HEK293 (cell line): ENCODE measurements at regions of chr11 and their contacts with region 1.

Region 1: DNA sequence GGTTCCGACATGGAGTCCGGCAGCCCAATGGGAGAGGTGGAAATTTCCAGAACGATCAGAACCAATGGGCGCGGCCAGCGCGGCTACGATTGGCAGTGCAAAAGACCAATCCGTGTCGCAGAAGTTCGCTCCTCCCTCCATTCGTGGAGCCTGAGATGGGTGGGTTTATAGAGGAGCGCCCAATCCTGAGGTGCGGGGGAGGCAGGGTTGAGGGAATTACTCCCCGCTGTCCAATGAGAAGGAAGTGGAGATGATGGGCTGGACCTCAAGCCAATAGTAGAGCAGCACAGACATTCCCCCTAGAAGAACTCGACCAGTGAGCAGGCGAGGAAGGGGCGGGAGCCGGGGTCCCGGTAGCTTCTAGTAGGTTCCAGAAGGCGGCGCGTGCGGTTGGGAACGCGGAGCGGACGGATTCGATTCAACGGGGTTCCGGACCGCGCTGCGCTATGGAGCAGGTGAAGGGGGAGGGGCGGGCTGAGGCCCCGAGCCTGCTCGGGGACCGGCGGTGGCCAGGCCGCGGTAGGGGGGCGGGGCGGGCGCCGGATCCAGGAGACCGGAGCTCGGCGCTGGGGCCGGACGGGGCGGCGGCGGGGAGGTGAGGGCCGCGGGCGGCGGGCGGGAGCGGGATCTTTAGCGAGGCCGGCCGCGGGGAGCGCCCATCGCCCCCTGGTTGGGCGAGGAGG is at the start of gene STIP1:
- H3K4me3 ChIP-seq: peak within 1 kb of the TSS; percentile 75
- H3K27ac ChIP-seq: peak within 1 kb of the TSS; percentile 82
- H3K4me1 ChIP-seq: peaks cover 3% of the 10 kb centered on the region; the same call in 1 of the 2 replicates
- CTCF ChIP-seq: peak; percentile 65

Region 2: DNA sequence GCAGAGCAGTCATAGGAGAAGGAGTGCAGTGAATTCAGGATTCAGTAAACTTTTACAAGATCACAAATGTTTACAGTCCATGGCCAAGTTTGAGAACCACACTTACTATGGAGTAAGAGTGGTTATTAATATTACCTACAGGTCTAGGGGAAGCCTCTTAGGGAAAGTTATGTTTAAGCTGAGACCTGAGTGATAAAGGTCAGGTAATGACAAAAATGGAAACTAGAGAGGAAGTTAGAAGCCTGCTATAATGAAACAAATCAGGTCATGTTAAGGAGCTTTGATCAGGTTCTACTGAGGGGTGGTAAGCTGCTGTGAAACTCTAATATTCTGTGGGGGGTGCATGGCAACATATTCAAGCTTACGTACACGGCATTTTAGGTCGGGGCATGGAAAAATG is 848.9 kb before region 1 on chr11:
- CTCF ChIA-PET with region 1: no interaction called
- POLR2A ChIA-PET with region 1: no interaction called
- H3K4me3 ChIP-seq: no peak overlapping the region
- H3K27ac ChIP-seq: no peak overlapping the region
- H3K4me1 ChIP-seq: no peaks in the 10 kb centered on the region
- CTCF ChIP-seq: no peak

Region 3: DNA sequence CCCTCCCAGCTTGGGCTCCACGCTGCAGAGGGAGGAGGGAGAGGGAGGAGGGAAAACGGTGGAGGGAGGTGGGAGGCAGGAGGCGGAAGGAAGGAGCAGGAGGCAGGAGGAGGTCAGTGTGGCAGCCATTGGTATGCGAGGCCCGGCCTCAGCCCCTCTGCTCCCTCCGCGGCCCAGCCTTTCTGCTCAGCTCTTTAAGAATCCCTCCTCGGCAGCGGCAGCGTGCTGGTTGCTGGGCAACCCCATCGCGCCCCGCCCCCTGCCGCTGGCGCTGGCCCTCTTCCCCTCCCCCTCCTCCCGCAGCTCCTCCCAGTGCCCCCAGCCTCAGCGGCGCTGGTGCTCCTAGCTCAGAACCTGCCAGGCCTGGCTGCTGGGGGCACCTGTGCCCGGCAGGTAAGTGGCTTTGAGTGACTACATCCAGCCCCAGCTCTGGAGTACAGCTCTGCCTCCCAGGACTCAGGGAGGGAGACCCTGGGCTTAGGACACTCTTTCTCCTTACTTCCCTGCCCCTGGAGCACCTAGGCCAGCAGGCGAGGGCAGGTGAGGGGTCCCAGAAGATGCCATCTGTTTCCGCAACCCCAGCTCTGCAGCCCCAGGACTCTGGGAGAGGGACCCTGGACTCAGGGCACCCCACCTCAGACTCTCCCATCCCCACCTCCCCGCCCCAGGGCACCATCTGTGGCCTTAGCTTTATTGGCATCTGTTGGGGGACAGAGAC is 157.4 kb before region 1 on chr11:
- CTCF ChIA-PET with region 1: no interaction called
- POLR2A ChIA-PET with region 1: no interaction called
- H3K4me3 ChIP-seq: no peak overlapping the region
- H3K27ac ChIP-seq: no peak overlapping the region
- H3K4me1 ChIP-seq: no peaks in the 10 kb centered on the region
- CTCF ChIP-seq: no peak

Region 4: DNA sequence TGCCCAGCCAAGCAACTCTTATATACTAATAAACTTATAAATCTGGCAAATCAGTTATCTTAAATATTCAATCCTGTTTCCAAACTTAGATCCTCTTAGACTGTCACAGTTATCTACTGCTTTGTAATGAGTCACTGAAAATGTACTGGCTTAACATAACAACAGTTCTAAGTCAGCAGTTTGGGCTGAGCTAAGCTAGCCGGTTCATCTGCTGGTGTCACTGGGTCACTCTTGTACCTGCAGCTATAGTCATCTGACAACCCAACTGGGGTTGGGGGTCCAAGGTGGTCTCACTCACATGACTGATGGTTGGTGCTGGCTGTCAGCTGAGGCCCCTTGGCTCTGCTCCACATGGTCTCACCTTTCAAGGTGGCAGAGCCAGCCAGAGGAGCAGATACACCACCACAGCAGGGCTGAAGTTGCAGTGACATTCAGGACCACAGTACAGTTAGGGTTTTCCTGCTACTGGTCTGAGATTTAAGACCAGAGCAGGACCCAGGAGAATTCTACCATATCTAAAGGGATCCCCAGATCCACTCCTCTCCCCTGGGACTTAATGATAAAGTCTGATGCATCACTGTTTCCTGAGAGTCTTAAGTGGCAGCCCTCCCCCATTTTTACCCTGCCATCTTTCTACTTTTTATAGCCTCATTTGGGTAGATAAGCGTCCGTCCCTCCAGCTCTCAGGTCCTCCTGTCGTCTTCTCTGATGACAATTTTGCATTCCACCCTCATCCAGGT is 12.2 kb before region 1 on chr11:
- CTCF ChIA-PET with region 1: interaction called, 3 read pairs
- POLR2A ChIA-PET with region 1: interaction called, 15 read pairs
- H3K4me3 ChIP-seq: no peak overlapping the region
- H3K27ac ChIP-seq: no peak overlapping the region
- H3K4me1 ChIP-seq: no peaks in the 10 kb centered on the region
- CTCF ChIP-seq: no peak

Region 5: DNA sequence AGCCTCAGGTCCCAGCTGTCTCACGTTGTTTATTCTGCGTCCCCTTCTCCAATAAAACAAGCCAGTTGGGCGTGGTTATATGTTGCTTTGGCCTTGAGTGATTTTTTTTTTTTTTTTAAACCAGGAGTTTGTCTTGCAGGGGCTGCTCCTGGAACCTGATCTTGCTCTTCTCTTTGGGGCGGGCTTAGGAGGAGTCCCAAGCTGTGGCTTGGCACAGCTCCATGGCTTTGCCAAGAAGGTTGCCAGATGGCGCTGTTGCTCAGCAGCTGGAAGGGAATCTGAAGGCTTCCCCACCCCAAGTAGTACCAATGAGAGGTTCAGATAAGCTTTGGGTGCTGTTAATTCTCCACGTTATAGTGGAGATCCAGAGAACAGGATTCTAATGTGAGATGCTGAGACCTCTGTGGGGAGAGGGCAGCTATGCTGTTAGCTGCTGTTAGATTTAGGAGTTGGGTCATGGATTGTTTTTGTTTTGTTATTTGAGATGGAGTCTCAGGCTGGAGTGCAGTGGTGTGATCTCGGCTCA is 18.6 kb after region 1 on chr11:
- CTCF ChIA-PET with region 1: interaction called, 31 read pairs
- POLR2A ChIA-PET with region 1: interaction called, 32 read pairs
- H3K4me3 ChIP-seq: no peak overlapping the region
- H3K27ac ChIP-seq: peak overlapping the region; percentile 55
- H3K4me1 ChIP-seq: 0 out of 2 replicates have a peak, but pooled peaks cover 8% of the 10 kb centered on the region
- CTCF ChIP-seq: peak; percentile 80

Region 6: GRCh38 chr11:64240394-64241174 is 54.6 kb after region 1 on chr11 and contains the start of gene FKBP2:
- CTCF ChIA-PET with region 1: no interaction called
- POLR2A ChIA-PET with region 1: interaction called, 13 read pairs
- H3K4me3 ChIP-seq: peak within 1 kb of the TSS; percentile 75
- H3K27ac ChIP-seq: peak within 1 kb of the TSS; percentile 83
- H3K4me1 ChIP-seq: no peaks in the 10 kb centered on the region
- CTCF ChIP-seq: no peak

Region 7: DNA sequence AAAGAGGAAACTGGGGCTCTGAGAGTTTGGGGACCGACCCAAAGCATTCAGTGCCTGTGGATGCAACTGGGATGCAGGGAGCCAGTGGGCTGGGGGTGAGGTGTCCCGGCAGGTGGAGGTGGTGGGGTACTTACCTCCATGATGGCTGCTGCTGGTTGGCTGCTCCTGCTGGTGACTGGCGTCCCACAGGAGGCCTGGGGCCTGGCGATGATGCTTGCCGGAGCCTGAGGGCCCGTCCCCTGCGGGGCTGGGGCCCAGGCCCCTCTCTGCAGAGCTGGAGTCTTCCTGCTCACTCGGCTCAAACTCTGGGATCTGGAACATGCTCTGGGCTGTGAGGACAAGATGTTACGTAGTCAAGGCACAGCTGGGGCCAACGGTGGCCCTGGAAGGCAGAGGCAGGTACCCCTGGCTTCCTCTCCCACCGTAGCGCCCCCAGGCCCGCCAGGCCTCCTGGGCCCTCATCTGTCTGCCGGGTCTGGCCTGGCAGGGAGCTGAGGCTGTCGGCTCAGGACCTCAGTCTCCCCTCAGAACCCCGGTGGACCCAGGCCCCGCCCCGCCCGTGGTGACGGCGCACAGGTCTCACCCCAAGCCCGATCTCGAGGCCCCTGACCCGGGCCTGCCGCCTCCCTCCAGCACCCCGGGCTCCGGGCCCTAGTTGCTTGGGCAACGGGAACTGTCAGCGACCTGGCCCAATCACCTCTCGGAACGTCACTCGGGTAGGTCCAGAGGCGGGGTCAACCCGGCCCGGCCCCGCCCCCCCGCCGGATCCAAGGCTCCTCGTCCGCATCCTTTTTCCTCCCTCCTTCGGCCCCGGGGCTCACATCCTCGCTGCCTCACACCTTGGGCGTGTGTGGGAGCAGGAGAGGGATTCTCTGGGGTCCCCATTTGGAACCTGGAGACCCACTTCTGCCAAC is 98.3 kb after region 1 on chr11 and contains the start of gene BAD:
- CTCF ChIA-PET with region 1: no interaction called
- POLR2A ChIA-PET with region 1: interaction called, 11 read pairs
- H3K4me3 ChIP-seq: peak within 1 kb of the TSS; percentile 82
- H3K27ac ChIP-seq: peak within 1 kb of the TSS; percentile 86
- H3K4me1 ChIP-seq: no peaks in the 10 kb centered on the region; the same call in 1 of the 2 replicates
- CTCF ChIP-seq: no peak; the same call in 1 of the 2 replicates

Region 8: DNA sequence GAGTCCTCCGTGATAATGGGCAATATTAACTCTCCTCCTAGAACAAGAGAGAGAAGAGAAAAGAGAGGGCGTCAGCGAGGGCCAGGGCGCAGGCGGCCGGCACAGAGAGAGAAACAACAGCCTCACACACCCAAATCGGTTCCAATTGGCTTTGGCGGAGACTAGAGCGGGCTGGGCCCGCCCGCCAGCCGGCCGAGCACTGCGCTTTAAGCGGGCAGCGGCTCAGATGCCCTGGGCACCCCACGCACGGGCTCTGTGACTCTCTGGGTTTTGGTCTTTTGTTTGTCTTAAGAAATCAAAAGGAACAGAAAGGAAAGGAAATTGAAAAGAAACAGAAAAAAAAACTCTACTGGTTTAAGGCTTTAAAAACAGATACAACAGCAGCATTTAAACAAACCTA is 422.1 kb after region 1 on chr11:
- CTCF ChIA-PET with region 1: no interaction called
- POLR2A ChIA-PET with region 1: no interaction called
- H3K4me3 ChIP-seq: no peak overlapping the region
- H3K27ac ChIP-seq: no peak overlapping the region
- H3K4me1 ChIP-seq: no peaks in the 10 kb centered on the region
- CTCF ChIP-seq: no peak